ENCODE measurements at regions of chr2 and their contacts with region 1.

Region 1: DNA sequence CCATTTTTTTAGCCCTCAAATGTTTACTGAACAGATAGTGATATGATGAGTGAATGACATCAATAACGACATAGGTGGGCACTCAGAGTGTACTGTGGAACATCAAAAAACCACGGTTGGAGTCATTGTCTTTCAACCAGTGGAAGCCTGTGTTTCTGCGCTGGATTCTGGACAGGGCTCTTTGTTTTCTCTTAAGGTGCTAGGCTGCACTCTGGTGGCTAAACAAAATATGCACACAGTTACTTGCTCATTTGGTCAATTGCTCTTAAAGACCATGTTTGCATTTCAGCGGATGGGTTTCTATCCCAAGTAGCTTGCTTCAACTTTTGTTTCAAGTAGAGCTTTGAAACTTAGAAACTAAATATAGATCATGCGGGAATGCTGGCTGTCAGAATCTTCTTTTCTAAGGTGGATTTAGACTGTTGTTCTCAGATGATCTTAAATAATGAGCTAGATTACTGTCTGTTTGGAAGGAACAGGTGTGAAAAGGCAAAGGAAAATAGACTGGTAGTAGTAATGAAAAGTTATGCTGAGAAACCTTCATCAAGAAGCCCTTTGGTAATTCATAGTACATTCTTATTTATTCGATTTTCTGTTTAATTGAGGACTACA is 48.5 kb upstream of the LYPD6B start:
- DNase-seq: peak; percentile 69 to 70
- H3K4me3 ChIP-seq: no peak overlapping the region
- H3K27ac ChIP-seq: no peak overlapping the region
- H3K4me1 ChIP-seq: no peaks in the 10 kb centered on the region
- H3K27me3 ChIP-seq: no peaks in the 10 kb centered on the region
- CTCF ChIP-seq: peak in 5 of 6 experiments; percentile 17 to 95 (median 86)
- POLR2A ChIP-seq: no peak

Region 2: DNA sequence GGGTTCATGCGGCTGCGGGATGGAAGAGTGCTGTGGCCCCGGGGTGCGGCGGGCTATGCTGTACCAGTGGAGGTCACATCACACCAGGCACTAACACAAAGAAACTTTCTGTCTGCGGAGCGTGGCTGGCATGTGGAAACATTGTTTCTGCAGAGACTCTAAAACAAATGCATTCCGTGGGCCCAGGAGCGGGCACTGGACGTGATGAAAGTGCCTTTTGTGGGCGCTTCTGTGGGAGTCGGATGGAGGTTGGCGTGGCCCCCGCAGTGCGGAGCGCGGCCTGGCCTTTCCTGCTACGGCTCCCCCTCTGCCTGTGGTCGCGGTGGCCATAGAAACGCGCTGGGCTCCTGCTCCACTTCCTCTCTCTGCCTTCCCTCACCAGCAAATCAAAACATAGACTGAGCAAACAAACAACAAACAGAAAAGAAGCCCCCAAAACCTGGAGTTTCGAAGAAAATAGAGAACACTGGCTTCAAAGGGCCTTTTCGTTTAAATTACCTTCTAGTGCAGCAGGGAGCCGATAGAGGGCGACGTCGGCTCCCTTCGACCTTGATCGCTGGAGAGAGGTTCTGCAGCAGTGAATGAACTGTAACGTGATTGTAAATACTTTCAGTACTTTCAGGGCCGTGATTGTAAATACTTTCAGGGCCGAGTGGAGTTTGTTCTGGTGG is 63.6 kb before region 1 on chr2:
- intact Hi-C with region 1: loop called (anchors 5 kb)
- DNase-seq: peak; percentile 56 to 66
- H3K4me3 ChIP-seq: no peak overlapping the region
- H3K27ac ChIP-seq: no peak overlapping the region
- H3K4me1 ChIP-seq: peaks cover 0 to 3% of the 10 kb centered on the region in 2 donors
- H3K27me3 ChIP-seq: no peaks in the 10 kb centered on the region
- CTCF ChIP-seq: peak; percentile 22 to 85 (median 72)
- POLR2A ChIP-seq: no peak

Measured in thyroid gland (tissue), 4 donors.